SK-MEL-5 (cell line): ENCODE measurements at regions of chr5 and their contacts with region 1.

Region 1: DNA sequence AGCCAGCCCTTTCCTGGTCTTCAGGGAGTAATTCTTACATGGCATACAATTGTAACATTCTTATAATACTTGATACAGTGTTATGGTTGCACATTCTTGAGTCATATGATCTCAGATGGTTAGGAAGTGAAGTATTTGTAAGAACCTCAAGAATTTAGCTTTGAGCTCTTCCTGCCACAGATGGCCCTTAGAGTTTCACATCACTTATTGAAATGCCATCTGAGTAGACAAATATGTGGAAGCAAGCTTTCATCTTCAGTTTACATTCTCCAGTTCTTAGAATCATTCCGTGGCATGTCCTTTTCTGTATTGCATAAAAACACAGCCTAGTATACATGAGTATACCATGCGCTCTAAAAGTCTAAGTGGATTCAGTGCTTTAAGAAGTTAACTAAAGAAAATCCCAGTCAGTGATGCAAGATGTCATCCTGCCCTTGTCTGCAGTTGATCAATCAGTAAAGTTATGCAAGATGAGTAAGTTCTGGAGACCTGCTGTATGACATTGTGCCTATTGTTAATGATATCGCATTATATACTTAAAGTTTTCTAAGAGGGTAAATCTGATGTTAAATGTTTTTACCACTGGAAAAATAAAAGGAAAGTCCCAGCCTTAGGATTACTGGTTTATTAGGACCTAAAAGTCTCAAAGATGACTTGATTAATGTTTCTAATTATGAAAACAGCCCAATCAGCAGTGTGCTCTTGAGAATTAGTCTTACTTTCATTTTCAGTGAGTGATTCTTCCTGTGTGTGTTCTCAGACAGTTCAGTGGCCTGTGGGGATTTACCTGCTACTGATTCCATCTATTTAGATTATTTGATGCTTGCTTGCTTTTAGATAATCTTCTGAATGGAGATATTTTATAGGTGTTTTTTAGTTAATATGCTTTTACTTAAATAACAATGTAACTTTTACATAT is 29.4 kb downstream of the RHOBTB3 start:
- DNase-seq: peak; percentile 96

Region 2: DNA sequence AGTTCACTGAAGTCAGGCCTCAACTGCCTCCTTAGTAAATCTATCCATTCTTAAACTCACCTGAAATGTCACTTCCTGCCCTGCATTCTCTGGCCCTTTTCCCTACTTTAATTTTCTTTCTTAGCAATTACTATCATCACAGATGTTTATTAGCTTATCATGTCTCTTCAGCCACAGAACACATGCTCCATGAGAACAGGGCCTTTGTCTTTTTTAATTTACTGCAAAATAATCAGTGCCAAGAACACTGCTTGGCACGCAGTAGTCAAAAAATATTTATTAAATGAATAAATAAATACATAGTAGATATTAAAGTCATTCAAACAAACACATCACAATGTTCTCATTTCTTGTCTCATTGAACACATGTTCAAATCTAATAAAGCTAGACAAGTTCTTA is 252.0 kb before region 1 on chr5:
- in situ Hi-C with region 1: no loop called
- DNase-seq: no peak

Region 3: GRCh38 chr5:95664204-95664786 is 96.2 kb before region 1 on chr5:
- in situ Hi-C with region 1: loop called (anchors 25 kb)
- DNase-seq: peak; percentile 53